CD14-positive monocyte (primary cell): ENCODE measurements at regions of chr1 and their contacts with region 1.

Region 1: DNA sequence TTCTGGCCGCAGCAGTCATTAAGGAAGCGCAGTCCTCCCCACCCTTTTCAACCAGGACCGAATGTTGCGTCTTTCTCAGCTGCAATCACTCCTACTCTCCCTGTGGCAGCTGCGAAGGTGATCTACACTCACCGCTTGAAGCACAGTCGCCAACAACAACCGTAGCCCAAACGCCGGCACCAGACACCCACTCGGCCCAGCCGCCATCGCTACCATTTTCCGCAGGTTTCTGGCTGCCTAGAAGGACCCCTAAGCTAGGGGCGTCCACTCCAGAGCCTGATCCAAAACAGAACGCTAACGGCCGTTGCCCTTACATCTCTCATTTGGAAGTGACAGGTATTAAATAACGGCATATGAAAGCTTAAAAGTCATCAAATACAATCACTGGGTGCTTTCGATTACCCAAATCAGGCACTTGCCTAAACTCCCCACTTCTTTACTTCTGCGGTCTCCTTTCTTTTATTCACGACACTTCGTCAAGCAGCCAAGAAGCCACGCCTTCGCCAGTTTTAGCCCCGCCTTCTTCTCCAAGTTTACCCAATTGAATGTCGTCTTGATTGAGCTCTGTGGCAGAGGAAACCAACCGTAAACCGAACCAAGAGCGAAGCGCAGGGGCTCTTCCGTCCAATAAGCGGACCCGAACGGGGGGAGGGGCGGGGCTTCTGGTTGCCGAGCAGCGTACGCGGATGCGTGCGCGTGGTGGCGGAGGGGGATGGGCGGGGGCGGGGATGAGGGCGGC is at the start of gene SELENOF:
- DNase-seq: peak; percentile 99 to 100 (median 100)
- H3K4me3 ChIP-seq: peak within 1 kb of the TSS; percentile 93 to 99 (median 98)
- H3K4me3 Mint-ChIP-seq: no peak within 1 kb of the TSS
- H3K27ac ChIP-seq: peak within 1 kb of the TSS; percentile 87 to 99
- H3K27ac Mint-ChIP-seq: no peak within 1 kb of the TSS
- H3K4me1 ChIP-seq: peaks cover 17 to 22% of the 10 kb centered on the region in 2 donors
- H3K4me1 Mint-ChIP-seq: peaks cover 28% of the 10 kb centered on the region
- H3K27me3 ChIP-seq: no peaks in the 10 kb centered on the region
- H3K27me3 Mint-ChIP-seq: no peaks in the 10 kb centered on the region
- CTCF ChIP-seq: no peak
- polyA plus RNA-seq, gene SELENOF: 111 to 357 (median 339) TPM

Region 2: DNA sequence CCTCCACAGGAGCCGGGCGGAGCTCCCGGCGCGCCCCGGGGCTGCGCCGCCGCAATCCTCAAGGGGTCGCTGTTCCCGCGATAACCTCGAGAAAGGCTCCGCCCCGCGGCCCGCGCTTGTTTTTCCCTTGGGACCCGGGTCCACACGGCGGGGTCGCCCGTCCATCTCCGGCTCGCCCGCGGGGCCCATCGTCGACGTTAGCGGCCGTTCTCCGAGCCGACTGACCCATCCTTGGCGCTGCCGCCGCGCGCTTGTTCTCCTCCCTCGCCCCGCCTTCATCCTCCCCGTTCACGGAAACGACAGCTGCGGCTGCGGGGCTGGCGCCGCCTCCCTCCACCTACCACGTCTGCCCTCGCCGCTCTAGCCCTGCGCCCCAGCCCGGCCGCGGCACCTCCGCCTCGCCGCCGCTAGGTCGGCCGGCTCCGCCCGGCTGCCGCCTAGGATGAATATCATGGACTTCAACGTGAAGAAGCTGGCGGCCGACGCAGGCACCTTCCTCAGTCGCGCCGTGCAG is 209.6 kb before region 1 on chr1 and contains the start of gene SH3GLB1:
- intact Hi-C with region 1: loop called (anchors 2 to 5 kb)
- DNase-seq: peak; percentile 78 to 83 (median 79)
- H3K4me3 ChIP-seq: peak within 1 kb of the TSS; percentile 55 to 95 (median 68)
- H3K4me3 Mint-ChIP-seq: peak within 1 kb of the TSS; percentile 99 to 100
- H3K27ac ChIP-seq: peak within 1 kb of the TSS; percentile 95 to 98
- H3K27ac Mint-ChIP-seq: peak within 1 kb of the TSS; percentile 98 to 100 (median 99)
- H3K4me1 ChIP-seq: peaks cover 26 to 32% of the 10 kb centered on the region in 2 donors
- H3K4me1 Mint-ChIP-seq: peaks cover 37% of the 10 kb centered on the region
- H3K27me3 ChIP-seq: no peaks in the 10 kb centered on the region
- H3K27me3 Mint-ChIP-seq: peaks cover 0 to 3% (median 0%) of the 10 kb centered on the region in 3 donors
- CTCF ChIP-seq: peak; percentile 98
- polyA plus RNA-seq, gene SH3GLB1: 21.9 to 92.3 (median 75.8) TPM

Region 3: DNA sequence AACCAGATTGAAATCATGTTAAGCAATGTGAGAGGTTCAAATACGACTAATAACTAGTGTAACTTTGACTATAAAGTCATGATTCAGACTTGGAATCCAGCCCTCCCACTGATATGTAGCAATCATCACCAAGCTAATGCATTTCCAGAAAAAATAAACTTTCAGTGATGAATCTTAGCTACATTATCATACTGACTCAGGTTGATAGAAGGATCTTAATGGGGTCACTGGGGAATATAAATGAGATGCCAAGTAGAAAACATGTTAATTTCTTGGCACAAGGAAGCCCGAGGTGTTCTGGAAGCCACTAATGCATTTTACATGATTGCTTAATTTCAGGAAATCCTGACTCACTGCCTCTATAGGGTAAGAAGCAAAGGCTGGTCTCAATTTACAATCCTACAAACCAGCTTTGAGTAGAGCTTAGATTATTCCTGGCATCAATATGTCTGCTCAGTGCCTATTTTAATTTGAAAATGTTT is 67.9 kb before region 1 on chr1:
- intact Hi-C with region 1: no loop called
- DNase-seq: peak; percentile 21 to 59 (median 54)
- H3K4me3 ChIP-seq: peak overlapping the region in 1 of 3 experiments; percentile 28
- H3K4me3 Mint-ChIP-seq: peak overlapping the region in 1 of 2 donors; percentile 68
- H3K27ac ChIP-seq: peak overlapping the region in 1 of 2 donors; percentile 21
- H3K27ac Mint-ChIP-seq: peak overlapping the region in 3 of 7 donors; percentile 59 to 74 (median 64)
- H3K4me1 ChIP-seq: peaks cover 9 to 15% of the 10 kb centered on the region in 2 donors
- H3K4me1 Mint-ChIP-seq: peaks cover 17% of the 10 kb centered on the region
- H3K27me3 ChIP-seq: no peaks in the 10 kb centered on the region
- H3K27me3 Mint-ChIP-seq: peaks cover 0 to 4% (median 3%) of the 10 kb centered on the region in 3 donors
- CTCF ChIP-seq: no peak

Region 4: DNA sequence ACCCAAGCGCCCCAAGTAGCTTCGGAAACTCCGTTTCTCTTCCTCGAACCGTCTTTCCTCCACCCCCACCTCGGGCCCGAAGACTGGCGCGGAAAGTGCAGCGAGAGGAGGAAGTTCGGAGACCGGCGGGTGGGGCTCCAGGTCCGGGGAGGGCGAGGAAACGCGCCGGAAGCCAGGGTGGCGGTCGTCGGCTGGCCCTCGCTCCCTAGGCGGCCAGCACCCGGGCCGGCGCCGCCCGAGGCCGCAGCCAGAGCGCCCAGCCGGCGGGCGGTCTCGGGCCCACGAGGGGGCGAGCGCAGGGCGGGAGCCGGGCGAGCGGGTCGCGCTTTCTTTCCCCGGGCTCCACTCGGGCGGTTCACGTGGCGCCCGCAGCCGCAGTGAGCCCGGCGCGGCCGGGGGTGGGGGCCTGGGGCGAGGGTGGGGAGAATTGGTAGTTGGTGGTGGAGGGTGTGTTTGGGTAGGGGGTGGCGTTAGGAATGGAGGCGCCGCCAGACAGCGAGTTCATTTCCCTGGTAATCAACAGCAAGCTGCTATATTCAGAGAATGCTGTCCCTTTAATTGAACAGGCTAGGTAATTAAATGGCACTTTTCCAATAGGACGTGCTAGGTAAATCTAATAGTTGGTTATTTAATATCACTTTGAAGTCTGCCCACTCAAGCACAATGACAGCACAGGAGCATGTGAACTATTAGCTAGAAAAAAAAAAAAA is 421.3 kb after region 1 on chr1:
- intact Hi-C with region 1: loop called (anchors 10 kb)
- DNase-seq: peak; percentile 63 to 75 (median 72)
- H3K4me3 ChIP-seq: peak overlapping the region; percentile 47 to 84 (median 68)
- H3K4me3 Mint-ChIP-seq: peak overlapping the region; percentile 85 to 92
- H3K27ac ChIP-seq: peak overlapping the region; percentile 61 to 79
- H3K27ac Mint-ChIP-seq: peak overlapping the region; percentile 85 to 95 (median 91)
- H3K4me1 ChIP-seq: peaks cover 37 to 51% of the 10 kb centered on the region in 2 donors
- H3K4me1 Mint-ChIP-seq: peaks cover 63% of the 10 kb centered on the region
- H3K27me3 ChIP-seq: no peaks in the 10 kb centered on the region
- H3K27me3 Mint-ChIP-seq: peaks cover 0 to 3% (median 0%) of the 10 kb centered on the region in 3 donors
- CTCF ChIP-seq: no peak